PC-3 (cell line): ENCODE measurements at regions of chr16 and their contacts with region 1.

Region 1: GRCh38 chr16:69286941-69287713 is 24.0 kb upstream of the VPS4A start:
- DNase-seq: peak; percentile 65
- ATAC-seq: peak; percentile 24
- H3K4me3 ChIP-seq: no peak overlapping the region
- H3K27ac ChIP-seq: no peak overlapping the region
- H3K4me1 ChIP-seq: no peaks in the 10 kb centered on the region
- H3K27me3 ChIP-seq: no peaks in the 10 kb centered on the region
- CTCF ChIP-seq: peak; percentile 47

Region 2: DNA sequence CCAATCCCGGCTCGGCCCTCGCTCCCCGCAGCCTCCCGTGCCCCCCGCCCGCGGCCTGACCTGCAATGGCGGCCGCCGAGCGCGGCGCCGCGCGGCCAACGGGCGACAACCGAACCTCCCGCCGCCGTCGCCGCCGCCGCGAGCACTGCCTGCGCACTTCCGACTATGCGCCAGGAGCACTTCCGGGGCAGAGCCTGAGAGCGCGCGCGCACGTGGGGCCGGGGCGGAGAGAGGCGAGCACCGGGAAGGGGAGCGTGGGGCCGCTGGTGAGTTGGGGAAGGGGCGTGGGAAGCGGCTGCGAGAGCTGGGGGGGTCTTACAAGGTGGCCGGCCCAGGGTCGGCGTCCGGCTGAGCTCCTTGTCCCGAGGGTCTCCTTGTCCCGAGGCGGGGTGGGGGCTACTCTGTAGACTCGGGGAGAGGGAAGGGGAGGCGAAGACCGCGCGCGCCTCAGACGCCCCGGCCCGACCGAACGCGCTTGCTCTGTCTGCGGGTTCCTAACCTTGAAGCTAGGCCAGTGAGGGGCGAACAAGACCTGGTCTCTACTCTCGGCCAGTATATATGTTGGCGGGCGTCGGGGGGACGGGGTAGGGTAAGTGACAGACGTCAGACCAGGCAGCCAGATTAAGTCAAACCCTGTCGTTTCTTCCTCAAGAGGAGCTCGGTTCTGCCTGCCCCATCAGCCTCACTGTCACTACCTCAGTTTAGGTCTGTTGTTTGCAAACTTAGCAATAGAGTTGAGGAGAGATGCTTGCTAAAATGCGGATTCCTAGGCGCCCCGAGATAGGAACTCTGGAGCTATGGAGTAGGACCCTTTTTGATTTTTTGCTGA is 154.5 kb before region 1 on chr16 and contains the starts of genes CHTF8 and UTP4:
- CTCF ChIA-PET with region 1: no interaction called
- POLR2A ChIA-PET with region 1: interaction called, 13 read pairs
- intact Hi-C with region 1: no loop called
- DNase-seq: peak; percentile 71
- ATAC-seq: peak; percentile 93
- H3K4me3 ChIP-seq: peak within 1 kb of the TSS; percentile 97
- H3K27ac ChIP-seq: peak within 1 kb of the TSS; percentile 73
- H3K4me1 ChIP-seq: peaks cover 21% of the 10 kb centered on the region
- H3K27me3 ChIP-seq: no peaks in the 10 kb centered on the region
- CTCF ChIP-seq: no peak
- total RNA-seq, gene CHTF8: 45.9 and 54.7 TPM in 2 replicates
- total RNA-seq, gene UTP4: 26.4 and 26.9 TPM in 2 replicates

Region 3: DNA sequence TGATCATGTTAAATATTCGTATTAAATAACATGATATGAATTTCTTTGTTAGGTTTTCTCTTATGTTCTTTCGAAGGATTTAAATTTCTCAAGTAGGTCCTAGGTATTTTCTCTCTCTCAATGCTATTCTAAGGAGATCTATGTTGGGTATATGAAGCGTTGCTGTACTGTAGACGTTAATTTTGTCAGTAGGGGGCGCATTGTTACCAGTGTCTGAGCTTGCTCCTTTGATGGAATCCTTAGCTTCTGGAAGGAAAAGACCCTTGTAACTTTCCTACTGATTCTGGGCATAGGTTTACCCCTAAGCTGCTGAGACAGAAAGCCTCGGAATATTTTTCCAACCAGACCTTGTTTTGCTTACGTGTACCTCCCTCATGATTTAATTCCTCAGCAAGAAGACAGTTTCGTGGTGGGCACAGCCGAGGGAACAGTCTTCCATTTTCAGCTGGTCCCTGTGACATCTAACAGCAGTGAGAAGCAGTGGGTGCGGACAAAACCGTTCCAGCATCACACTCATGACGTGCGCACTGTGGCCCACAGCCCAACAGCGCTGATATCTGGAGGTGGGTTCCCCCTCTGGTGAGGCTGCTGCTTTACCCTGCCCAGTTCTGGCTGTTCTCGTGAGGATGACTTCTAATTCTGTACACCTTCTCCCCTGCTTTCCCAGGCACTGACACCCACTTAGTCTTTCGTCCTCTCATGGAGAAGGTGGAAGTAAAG is 136.8 kb before region 1 on chr16:
- CTCF ChIA-PET with region 1: interaction called, 4 read pairs
- POLR2A ChIA-PET with region 1: interaction called, 3 read pairs
- intact Hi-C with region 1: loop called (anchors 1 kb)
- DNase-seq: peak; percentile 74
- ATAC-seq: peak; percentile 85
- H3K4me3 ChIP-seq: no peak overlapping the region
- H3K27ac ChIP-seq: no peak overlapping the region
- H3K4me1 ChIP-seq: no peaks in the 10 kb centered on the region
- H3K27me3 ChIP-seq: no peaks in the 10 kb centered on the region
- CTCF ChIP-seq: peak; percentile 82

Region 4: GRCh38 chr16:69166221-69166833 is 120.8 kb before region 1 on chr16:
- CTCF ChIA-PET with region 1: no interaction called
- POLR2A ChIA-PET with region 1: no interaction called
- intact Hi-C with region 1: loop called (anchors 1 kb)
- DNase-seq: peak; percentile 76
- ATAC-seq: peak; percentile 68
- H3K4me3 ChIP-seq: peak overlapping the region; percentile 28; the same call in 1 of the 2 replicates
- H3K27ac ChIP-seq: peak overlapping the region; percentile 99
- H3K4me1 ChIP-seq: peaks cover 29% of the 10 kb centered on the region
- H3K27me3 ChIP-seq: no peaks in the 10 kb centered on the region
- CTCF ChIP-seq: no peak